Left ventricle myocardium inferior (tissue), 1 donor: ENCODE measurements at regions of chr12 and their contacts with region 1.

Region 1: DNA sequence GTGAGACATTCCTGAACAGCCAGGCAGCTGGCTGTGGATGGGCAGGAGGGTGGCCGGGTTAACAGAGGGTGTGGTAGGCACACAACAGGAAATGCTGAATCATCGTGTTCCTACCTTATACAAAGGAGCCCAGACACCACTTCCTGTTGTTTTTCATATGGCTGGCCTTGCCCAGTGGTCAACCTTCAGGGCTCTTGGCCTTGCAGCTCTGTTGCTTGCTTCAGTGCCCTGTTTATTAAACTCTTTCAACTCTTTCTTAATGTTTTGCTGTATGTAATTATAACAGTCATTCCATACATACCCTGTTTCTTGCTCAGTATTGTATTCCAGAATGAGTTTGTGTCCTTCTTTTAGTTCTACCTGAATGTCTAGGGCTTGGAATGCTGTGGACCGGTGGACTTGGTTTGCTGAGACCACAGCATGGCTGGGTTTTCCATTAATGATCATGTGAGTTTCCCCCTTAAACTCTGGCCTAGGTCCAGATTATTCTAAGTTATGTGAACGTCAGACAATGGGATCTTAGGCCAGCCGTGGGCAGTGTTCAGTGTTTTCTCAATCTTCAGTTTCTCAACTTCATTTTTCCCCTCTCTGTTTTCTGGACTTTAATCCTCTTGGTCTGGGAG is 11.9 kb downstream of the CFAP54 start:
- DNase-seq: peak; percentile 18
- H3K4me3 ChIP-seq: no peak overlapping the region
- H3K27ac ChIP-seq: peak overlapping the region; percentile 89
- H3K4me1 ChIP-seq: peaks cover 32% of the 10 kb centered on the region
- H3K27me3 ChIP-seq: no peaks in the 10 kb centered on the region
- CTCF ChIP-seq: no peak

Region 2: DNA sequence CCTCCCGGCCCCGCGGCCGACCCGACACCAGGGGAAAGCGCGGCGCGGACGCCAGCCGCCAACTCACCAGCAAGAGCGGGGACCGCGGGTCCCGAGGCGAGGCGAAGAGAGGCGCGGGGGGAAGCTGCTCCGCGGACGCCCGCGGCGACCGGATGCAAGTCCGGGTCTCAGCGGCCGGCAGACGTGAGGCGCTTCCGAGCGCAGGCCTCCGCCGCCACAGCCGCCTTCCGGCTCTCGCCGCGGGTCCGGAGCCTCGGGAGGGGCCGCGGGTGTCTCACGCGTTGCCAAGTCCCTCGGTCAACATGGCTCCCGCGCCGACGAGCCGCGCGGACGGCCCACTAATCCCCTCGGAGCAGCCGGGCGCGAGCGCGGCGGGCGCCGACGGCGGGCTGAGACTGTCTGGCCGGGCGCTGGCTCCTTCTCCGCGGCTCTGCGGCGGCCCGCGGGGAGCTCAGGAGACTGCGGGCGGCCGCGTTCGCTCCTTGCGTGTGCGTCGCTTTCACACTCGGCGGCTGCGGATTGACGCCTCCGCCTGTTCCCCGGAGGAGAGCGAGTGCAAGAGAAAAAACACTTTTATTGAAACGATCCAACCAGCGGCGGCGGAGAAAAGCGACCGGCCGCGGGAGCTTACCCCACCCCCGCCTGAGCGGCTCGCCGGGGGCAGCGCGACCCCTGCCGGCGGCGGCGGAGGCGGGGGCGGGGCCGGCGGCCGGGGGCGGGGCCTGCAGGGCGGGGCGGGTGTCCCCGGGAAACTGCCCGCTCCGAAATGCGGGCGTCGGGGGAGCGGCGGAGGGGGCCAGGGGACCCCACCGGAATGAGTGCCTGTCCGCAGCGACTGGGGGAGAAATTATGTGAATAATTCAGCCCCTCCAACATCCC is 101.1 kb before region 1 on chr12 and contains the start of gene CDK17:
- intact Hi-C with region 1: loop called (anchors 10 kb)
- DNase-seq: peak; percentile 84
- H3K4me3 ChIP-seq: peak within 1 kb of the TSS; percentile 90
- H3K27ac ChIP-seq: peak within 1 kb of the TSS; percentile 96
- H3K4me1 ChIP-seq: peaks cover 66% of the 10 kb centered on the region
- H3K27me3 ChIP-seq: no peaks in the 10 kb centered on the region
- CTCF ChIP-seq: peak; percentile 62
- total RNA-seq, gene CDK17: 15.9 TPM